ENCODE measurements at regions of chr22 and their contacts with region 1.

Region 1: GRCh38 chr22:49929208-49930136 is 11.0 kb downstream of the CRELD2 start:
- DNase-seq: no peak
- H3K4me3 ChIP-seq: peak overlapping the region in 2 of 3 donors; percentile 3 to 57
- H3K27ac ChIP-seq: no peak overlapping the region
- H3K4me1 ChIP-seq: peaks cover 12 to 29% of the 10 kb centered on the region in 2 donors
- H3K27me3 ChIP-seq: peaks cover 0 to 8% of the 10 kb centered on the region in 2 donors
- CTCF ChIP-seq: peak in 2 of 3 donors; percentile 22 to 94
- POLR2A ChIP-seq: no peak

Region 2: GRCh38 chr22:49667236-49667635 is 262.2 kb before region 1 on chr22:
- intact Hi-C with region 1: no loop called
- DNase-seq: peak in 1 of 2 donors; percentile 46
- H3K4me3 ChIP-seq: peak overlapping the region in 1 of 3 donors; percentile 19
- H3K27ac ChIP-seq: no peak overlapping the region
- H3K4me1 ChIP-seq: peaks cover 0 to 4% of the 10 kb centered on the region in 2 donors
- H3K27me3 ChIP-seq: peaks cover 2 to 73% of the 10 kb centered on the region in 2 donors
- CTCF ChIP-seq: no peak
- POLR2A ChIP-seq: no peak

Region 3: DNA sequence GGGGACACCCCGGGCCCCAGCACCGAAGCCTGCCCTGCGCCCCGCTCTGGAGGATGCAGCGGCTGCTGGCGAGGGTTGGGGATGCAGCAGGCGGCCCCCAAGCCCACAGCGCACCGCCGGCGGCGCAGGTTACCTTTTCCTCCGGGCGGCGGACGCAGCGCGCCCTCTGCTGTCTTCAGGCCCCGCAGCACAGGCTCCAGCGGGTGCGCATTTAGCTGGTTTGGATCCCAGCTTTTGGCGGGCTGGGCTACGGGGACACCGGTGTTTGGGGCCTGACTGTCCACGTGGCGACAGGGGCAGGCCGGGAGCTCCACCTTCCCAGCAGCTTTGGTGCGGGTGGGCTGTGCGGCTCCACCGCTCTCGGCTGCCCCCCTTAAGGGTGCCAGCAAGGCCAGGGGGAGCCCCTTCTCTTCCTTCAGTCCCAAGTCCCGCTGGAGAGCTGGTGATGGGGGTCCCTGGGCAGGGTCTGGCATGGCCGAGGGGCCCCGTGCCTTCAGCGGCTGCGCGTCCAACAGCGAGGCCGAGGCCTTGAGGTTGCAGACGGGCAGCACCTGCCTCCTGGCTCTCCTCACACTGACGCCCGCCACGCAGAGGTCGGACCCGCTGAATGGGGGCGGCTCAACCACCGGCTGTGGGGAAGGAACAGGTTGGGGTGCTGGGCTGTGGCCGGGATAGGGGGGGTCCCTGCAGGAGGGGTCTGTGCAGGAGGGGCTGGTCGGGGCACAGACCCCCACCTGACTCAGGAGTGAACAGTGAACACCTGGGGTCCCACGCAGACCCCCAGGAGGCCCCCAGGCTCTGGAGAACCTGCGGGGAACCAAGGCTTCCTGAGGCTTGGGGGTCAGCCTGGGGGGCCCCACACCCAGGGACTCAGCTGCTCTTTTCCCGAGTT is 101.1 kb after region 1 on chr22:
- intact Hi-C with region 1: loop called (anchors 5 kb)
- DNase-seq: peak; percentile 44 to 74
- H3K4me3 ChIP-seq: peak overlapping the region in 2 of 3 donors; percentile 9 to 26
- H3K27ac ChIP-seq: no peak overlapping the region
- H3K4me1 ChIP-seq: peaks cover 0 to 6% of the 10 kb centered on the region in 2 donors
- H3K27me3 ChIP-seq: peaks cover 0 to 22% of the 10 kb centered on the region in 2 donors
- CTCF ChIP-seq: peak in 2 of 3 donors; percentile 84 to 86
- POLR2A ChIP-seq: no peak

Measured in breast epithelium (tissue), 4 donors.